AG04449 (cell line): ENCODE measurements at regions of chr12 and their contacts with region 1.

Region 1: GRCh38 chr12:96399919-96400797 is at the start of gene CDK17:
- DNase-seq: no peak
- H3K4me3 ChIP-seq: peak within 1 kb of the TSS; percentile 82
- CTCF ChIP-seq: peak; percentile 43

Region 2: GRCh38 chr12:96061864-96062453 is 338.2 kb before region 1 on chr12:
- CTCF ChIA-PET with region 1: interaction called, 11 read pairs
- POLR2A ChIA-PET with region 1: no interaction called
- DNase-seq: peak; percentile 50
- H3K4me3 ChIP-seq: no peak overlapping the region
- CTCF ChIP-seq: peak; percentile 74

Region 3: GRCh38 chr12:96249196-96250118 is 150.7 kb before region 1 on chr12:
- CTCF ChIA-PET with region 1: interaction called, 13 read pairs
- POLR2A ChIA-PET with region 1: no interaction called
- DNase-seq: no peak
- H3K4me3 ChIP-seq: no peak overlapping the region
- CTCF ChIP-seq: no peak

Region 4: DNA sequence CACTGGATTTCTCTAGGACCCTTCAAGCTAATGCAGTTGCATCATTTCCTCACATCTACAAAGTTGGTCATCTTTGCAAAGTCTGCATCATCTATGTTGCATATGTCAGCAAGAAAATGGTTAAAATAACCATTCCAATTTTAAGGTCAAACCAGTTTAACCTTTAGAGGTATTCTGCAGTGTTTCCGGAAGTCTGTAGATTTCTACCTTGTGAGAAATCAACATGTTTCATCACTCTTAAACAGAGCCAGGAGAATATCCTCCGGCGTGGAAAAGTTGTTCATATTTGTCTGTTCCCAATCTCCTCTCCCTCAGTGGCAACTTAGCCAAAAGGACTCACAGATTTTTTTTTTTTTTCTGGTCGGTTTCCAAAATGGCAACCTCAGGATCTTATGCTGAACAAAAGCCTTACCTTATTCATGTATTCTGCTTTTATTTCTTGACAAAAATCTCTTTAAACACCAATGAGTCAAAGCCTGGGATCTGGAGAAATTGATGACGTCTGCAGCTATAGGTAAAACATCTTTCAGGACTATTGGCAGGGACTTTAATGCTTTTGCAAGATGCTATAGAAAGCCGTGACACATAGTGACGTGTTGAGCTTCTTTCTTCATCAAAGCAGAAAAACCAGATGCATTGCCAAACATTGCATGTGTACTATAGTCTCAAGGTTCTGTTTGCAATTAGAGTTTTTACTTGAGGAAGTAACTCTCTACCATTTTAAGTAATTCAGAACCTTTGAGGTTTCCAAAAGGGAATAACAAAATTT is 16.1 kb after region 1 on chr12:
- CTCF ChIA-PET with region 1: interaction called, 65 read pairs
- POLR2A ChIA-PET with region 1: interaction called, 3 read pairs
- DNase-seq: peak; percentile 69
- H3K4me3 ChIP-seq: no peak overlapping the region
- CTCF ChIP-seq: no peak

Region 5: GRCh38 chr12:96445691-96446583 is 45.8 kb after region 1 on chr12:
- CTCF ChIA-PET with region 1: interaction called, 4 read pairs
- POLR2A ChIA-PET with region 1: interaction called, 11 read pairs
- DNase-seq: peak; percentile 71
- H3K4me3 ChIP-seq: no peak overlapping the region; the same call in 1 of the 2 replicates
- CTCF ChIP-seq: no peak

Region 6: DNA sequence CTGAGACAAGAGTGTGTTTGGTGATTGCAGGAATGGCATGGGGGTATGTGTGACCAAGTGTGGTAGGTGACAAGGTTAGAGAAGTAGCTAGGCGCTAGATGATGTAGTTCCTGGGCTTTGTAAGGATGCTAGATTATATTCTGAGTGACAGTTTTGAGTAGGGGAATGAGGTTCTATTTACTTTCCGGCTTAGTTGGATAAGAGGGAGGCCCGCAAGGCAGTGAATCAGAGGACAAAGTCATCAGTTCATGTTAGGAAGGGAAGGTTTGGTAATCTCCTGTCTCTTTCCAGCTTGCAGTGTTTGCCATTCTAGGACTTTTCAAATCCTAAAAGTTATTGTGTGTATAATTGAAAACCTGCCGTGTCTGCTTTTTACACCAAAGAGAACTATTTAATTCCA is 134.2 kb after region 1 on chr12:
- CTCF ChIA-PET with region 1: no interaction called
- POLR2A ChIA-PET with region 1: no interaction called
- DNase-seq: no peak
- H3K4me3 ChIP-seq: no peak overlapping the region
- CTCF ChIP-seq: no peak

Region 7: GRCh38 chr12:96548384-96548783 is 148.2 kb after region 1 on chr12:
- CTCF ChIA-PET with region 1: no interaction called
- POLR2A ChIA-PET with region 1: no interaction called
- DNase-seq: no peak
- H3K4me3 ChIP-seq: no peak overlapping the region
- CTCF ChIP-seq: no peak